B cell (primary cell): ENCODE measurements at regions of chr4 and their contacts with region 1.

Region 1: DNA sequence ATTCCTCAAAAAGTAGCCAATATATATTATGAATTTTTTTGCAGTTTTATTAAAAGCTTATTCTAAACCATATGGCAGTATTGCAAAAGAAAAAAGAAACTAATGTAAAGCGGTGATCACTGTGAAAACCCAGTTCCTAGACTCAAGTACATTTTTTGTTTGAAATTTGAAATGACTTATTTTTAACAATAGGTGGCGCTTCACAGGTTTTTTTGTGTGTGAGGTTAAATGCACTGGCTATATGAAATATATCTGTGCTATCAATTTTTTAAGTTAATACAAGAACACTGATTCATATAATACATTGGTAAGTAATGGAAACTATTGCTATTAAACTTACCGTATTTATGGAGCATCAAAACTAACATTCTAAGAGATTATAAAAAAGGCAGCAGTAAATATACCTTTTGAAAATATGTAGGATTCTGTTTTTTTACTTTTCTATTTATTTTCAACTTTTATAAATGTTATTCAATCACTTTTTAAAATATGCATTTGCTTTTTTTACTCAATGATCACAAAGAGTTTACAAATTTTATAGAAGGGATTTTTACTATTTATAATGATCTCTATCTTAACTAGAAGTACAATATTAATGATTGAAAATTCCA is 5.6 kb upstream of the SPRY1 start:
- DNase-seq: peak; percentile 53
- ATAC-seq: no peak
- H3K4me3 ChIP-seq: no peak overlapping the region
- H3K4me3 Mint-ChIP-seq: no peak overlapping the region
- H3K27ac ChIP-seq: no peak overlapping the region
- H3K27ac Mint-ChIP-seq: no peak overlapping the region
- H3K4me1 ChIP-seq: no peaks in the 10 kb centered on the region
- H3K4me1 Mint-ChIP-seq: no peaks in the 10 kb centered on the region
- H3K27me3 ChIP-seq: no peaks in the 10 kb centered on the region
- H3K27me3 Mint-ChIP-seq: peaks cover 9% of the 10 kb centered on the region
- CTCF ChIP-seq: peak; percentile 86

Region 2: DNA sequence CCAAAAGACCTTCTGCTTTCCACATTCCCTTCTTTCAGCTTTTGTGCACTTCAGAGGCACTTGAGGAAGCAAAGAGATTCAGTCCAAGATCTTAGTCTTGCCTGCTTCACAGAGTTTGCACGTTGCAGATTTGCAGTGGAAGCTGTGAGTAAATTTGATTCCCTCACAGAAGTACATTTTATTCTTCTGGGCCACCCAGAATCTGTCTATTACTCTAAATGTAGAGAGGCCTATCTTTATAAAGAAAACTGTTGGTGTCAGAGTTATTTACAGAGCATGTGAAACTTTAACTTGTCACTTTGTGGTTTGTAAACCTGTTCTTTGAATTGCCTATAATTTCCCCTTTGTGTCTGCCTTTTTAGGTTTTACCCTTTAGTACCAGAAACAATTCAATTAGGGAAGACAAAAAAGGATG is 21.1 kb after region 1 on chr4:
- CTCF ChIA-PET with region 1: interaction called, 13 read pairs
- POLR2A ChIA-PET with region 1: no interaction called
- intact Hi-C with region 1: no loop called
- DNase-seq: no peak
- ATAC-seq: no peak
- H3K4me3 ChIP-seq: no peak overlapping the region
- H3K4me3 Mint-ChIP-seq: peak overlapping the region; percentile 33
- H3K27ac ChIP-seq: no peak overlapping the region
- H3K27ac Mint-ChIP-seq: no peak overlapping the region
- H3K4me1 ChIP-seq: peaks cover 13 to 22% of the 10 kb centered on the region in 2 donors
- H3K4me1 Mint-ChIP-seq: peaks cover 24% of the 10 kb centered on the region
- H3K27me3 ChIP-seq: no peaks in the 10 kb centered on the region
- H3K27me3 Mint-ChIP-seq: no peaks in the 10 kb centered on the region
- CTCF ChIP-seq: no peak

Region 3: GRCh38 chr4:123564758-123565346 is 173.9 kb after region 1 on chr4:
- CTCF ChIA-PET with region 1: interaction called, 25 read pairs
- POLR2A ChIA-PET with region 1: no interaction called
- intact Hi-C with region 1: loop called (anchors 1 kb)
- DNase-seq: peak; percentile 81
- ATAC-seq: peak; percentile 100
- H3K4me3 ChIP-seq: no peak overlapping the region
- H3K4me3 Mint-ChIP-seq: no peak overlapping the region
- H3K27ac ChIP-seq: no peak overlapping the region
- H3K27ac Mint-ChIP-seq: no peak overlapping the region
- H3K4me1 ChIP-seq: peaks cover 3 to 6% of the 10 kb centered on the region in 2 donors
- H3K4me1 Mint-ChIP-seq: peaks cover 2% of the 10 kb centered on the region
- H3K27me3 ChIP-seq: no peaks in the 10 kb centered on the region
- H3K27me3 Mint-ChIP-seq: peaks cover 17% of the 10 kb centered on the region
- CTCF ChIP-seq: peak; percentile 90

Region 4: DNA sequence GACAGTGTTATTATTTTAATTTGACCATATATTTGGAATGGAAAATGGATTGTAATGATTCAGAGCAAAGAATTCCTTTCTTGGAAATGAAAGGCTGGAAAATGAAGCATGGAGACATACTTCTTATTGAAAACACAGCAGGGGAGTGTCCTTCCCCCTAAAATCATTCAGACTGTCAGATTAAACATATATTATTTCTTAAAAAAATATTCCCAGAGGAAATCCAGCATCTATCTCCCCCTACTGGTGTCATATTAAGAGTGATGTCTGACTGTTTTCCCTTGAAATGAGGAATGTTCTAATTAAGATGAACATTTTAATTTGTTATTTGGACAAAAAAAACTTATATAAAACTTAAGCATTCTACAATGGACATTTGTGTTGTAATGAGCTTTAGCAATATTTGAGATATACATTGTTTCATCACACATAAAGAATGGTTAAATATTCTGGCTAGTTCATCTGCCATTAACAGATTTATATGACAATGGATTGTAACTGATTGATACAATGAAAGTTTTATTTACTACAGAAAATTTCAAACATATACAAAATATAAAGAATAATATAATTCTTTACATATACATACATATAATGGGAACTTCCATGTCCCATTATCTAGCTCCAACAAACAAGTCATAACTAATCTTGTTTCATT is 270.3 kb after region 1 on chr4:
- CTCF ChIA-PET with region 1: interaction called, 38 read pairs
- POLR2A ChIA-PET with region 1: no interaction called
- intact Hi-C with region 1: loop called (anchors 1 kb)
- DNase-seq: peak; percentile 30
- ATAC-seq: no peak
- H3K4me3 ChIP-seq: no peak overlapping the region
- H3K4me3 Mint-ChIP-seq: no peak overlapping the region
- H3K27ac ChIP-seq: no peak overlapping the region
- H3K27ac Mint-ChIP-seq: no peak overlapping the region
- H3K4me1 ChIP-seq: peaks cover 3 to 9% of the 10 kb centered on the region in 2 donors
- H3K4me1 Mint-ChIP-seq: peaks cover 8% of the 10 kb centered on the region
- H3K27me3 ChIP-seq: no peaks in the 10 kb centered on the region
- H3K27me3 Mint-ChIP-seq: peaks cover 17% of the 10 kb centered on the region
- CTCF ChIP-seq: peak; percentile 52

Region 5: DNA sequence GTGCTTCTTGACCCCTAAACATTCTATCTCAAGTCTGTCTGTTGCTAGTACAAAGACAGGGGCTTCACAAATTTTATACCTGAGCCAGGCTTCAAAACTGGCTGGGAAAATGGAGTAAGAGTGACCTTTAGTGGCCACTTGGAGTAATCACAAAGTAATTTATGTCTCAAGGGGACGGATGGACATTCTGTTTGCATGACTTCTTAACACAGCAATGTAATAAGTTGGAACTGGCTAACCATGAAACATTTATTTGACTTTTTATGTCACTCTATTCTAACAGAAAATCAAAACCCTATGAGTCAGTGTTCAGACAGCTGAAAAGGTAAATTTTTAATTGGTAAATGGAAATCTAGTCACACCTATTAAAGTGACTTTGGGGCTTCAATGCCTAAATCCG is 721.0 kb after region 1 on chr4:
- CTCF ChIA-PET with region 1: no interaction called
- POLR2A ChIA-PET with region 1: no interaction called
- intact Hi-C with region 1: loop called (anchors 5 kb)
- DNase-seq: peak; percentile 29
- ATAC-seq: no peak
- H3K4me3 ChIP-seq: no peak overlapping the region
- H3K4me3 Mint-ChIP-seq: no peak overlapping the region
- H3K27ac ChIP-seq: no peak overlapping the region
- H3K27ac Mint-ChIP-seq: no peak overlapping the region
- H3K4me1 ChIP-seq: no peaks in the 10 kb centered on the region
- H3K4me1 Mint-ChIP-seq: no peaks in the 10 kb centered on the region
- H3K27me3 ChIP-seq: no peaks in the 10 kb centered on the region
- H3K27me3 Mint-ChIP-seq: no peaks in the 10 kb centered on the region
- CTCF ChIP-seq: peak; percentile 17

Region 6: GRCh38 chr4:124262211-124263179 is 871.5 kb after region 1 on chr4:
- CTCF ChIA-PET with region 1: no interaction called
- POLR2A ChIA-PET with region 1: no interaction called
- intact Hi-C with region 1: loop called (anchors 2 kb)
- DNase-seq: peak; percentile 62
- ATAC-seq: peak; percentile 51
- H3K4me3 ChIP-seq: no peak overlapping the region
- H3K4me3 Mint-ChIP-seq: no peak overlapping the region
- H3K27ac ChIP-seq: no peak overlapping the region
- H3K27ac Mint-ChIP-seq: no peak overlapping the region
- H3K4me1 ChIP-seq: no peaks in the 10 kb centered on the region
- H3K4me1 Mint-ChIP-seq: no peaks in the 10 kb centered on the region
- H3K27me3 ChIP-seq: no peaks in the 10 kb centered on the region
- H3K27me3 Mint-ChIP-seq: no peaks in the 10 kb centered on the region
- CTCF ChIP-seq: peak; percentile 88